ENCODE measurements at regions of chr10 and their contacts with region 1.

Region 1: DNA sequence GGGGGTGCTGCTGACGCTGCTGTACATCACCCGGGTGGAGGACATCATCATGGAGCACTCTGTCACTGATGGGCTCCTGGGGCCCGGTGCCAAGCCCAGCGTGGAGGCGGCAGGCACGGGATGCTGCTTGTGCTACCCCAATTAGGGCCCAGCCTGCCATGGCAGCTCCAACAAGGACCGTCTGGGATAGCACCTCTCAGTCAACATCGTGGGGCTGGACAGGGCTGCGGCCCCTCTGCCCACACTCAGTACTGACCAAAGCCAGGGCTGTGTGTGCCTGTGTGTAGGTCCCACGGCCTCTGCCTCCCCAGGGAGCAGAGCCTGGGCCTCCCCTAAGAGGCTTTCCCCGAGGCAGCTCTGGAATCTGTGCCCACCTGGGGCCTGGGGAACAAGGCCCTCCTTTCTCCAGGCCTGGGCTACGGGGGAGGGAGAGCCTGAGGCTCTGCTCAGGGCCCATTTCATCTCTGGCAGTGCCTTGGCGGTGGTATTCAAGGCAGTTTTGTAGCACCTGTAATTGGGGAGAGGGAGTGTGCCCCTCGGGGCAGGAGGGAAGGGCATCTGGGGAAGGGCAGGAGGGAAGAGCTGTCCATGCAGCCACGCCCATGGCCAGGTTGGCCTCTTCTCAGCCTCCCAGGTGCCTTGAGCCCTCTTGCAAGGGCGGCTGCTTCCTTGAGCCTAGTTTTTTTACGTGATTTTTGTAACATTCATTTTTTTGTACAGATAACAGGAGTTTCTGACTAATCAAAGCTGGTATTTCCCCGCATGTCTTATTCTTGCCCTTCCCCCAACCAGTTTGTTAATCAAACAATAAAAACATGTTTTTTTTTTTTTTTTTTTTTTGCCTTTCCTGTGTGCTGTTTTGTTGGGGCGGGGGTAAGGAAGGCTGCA is 55.8 kb downstream of the TSPAN15 start:
- DNase-seq: peak in 2 of 4 experiments; percentile 6 to 9
- ATAC-seq: peak; percentile 9
- H3K4me3 ChIP-seq: no peak overlapping the region
- H3K27ac ChIP-seq: no peak overlapping the region
- H3K4me1 ChIP-seq: peaks cover 0 to 15% of the 10 kb centered on the region in 2 experiments; a peak in 2 of 5 replicates
- H3K27me3 ChIP-seq: peaks cover 29 to 53% of the 10 kb centered on the region in 2 experiments
- CTCF ChIP-seq: no peak
- EP300 ChIP-seq: no peak
- POLR2A ChIP-seq: no peak
- RAD21 ChIP-seq: no peak

Region 2: GRCh38 chr10:69004821-69005220 is 502.3 kb before region 1 on chr10:
- CTCF ChIA-PET with region 1: no interaction called
- POLR2A ChIA-PET with region 1: no interaction called
- in situ Hi-C with region 1: no loop called
- intact Hi-C with region 1: loop called (anchors 5 kb)
- DNase-seq: peak in 2 of 4 experiments; percentile 38 to 56
- ATAC-seq: peak; percentile 83
- H3K4me3 ChIP-seq: no peak overlapping the region
- H3K27ac ChIP-seq: no peak overlapping the region
- H3K4me1 ChIP-seq: no peaks in the 10 kb centered on the region
- H3K27me3 ChIP-seq: no peaks in the 10 kb centered on the region
- CTCF ChIP-seq: peak; percentile 54 to 90 (median 62); a peak in 5 of 6 replicates
- EP300 ChIP-seq: no peak
- POLR2A ChIP-seq: no peak
- RAD21 ChIP-seq: peak; percentile 91 to 98

Region 3: DNA sequence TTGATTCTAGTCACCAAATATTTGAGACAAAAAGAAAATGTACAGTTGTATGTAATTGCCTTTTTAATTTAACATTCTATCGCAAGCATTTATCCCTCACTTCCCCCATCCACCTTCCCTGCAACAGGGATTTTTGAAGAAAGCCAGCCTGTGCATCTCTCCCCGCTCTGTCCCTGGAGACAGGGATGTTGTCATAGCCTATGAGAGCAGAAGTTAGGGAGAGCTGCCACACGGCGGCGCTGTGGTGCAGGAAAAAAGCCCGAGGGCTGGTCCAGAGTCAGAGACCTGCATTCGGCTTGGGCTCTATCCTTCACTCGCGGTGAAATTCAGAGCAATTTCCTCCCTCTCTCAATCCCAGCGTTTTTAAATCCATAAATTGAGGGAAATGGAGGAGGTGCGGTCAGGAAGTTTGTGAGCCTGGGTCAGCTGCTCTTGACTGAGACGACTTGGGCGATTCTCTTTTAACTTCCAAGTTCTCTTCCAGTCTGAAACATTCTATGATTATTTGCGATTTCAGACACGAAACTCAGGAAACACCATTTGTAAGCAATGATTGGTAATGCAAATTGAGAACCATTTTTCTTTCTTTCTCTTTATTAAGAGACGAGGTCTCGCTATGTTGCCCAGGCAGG is 269.4 kb before region 1 on chr10:
- CTCF ChIA-PET with region 1: interaction called, 5 read pairs
- POLR2A ChIA-PET with region 1: no interaction called
- in situ Hi-C with region 1: no loop called
- intact Hi-C with region 1: loop called (anchors 1 kb)
- DNase-seq: peak; percentile 89 to 94 (median 92)
- ATAC-seq: peak; percentile 97
- H3K4me3 ChIP-seq: no peak overlapping the region
- H3K27ac ChIP-seq: no peak overlapping the region
- H3K4me1 ChIP-seq: peaks cover 13% of the 10 kb centered on the region in 2 experiments; a peak in 4 of 5 replicates
- H3K27me3 ChIP-seq: no peaks in the 10 kb centered on the region
- CTCF ChIP-seq: peak; percentile 94 to 99 (median 97)
- EP300 ChIP-seq: no peak
- POLR2A ChIP-seq: no peak
- RAD21 ChIP-seq: peak; percentile 99 to 100

Region 4: GRCh38 chr10:69408318-69409175 is 98.5 kb before region 1 on chr10:
- CTCF ChIA-PET with region 1: interaction called, 37 read pairs
- POLR2A ChIA-PET with region 1: no interaction called
- in situ Hi-C with region 1: no loop called
- intact Hi-C with region 1: no loop called
- DNase-seq: peak; percentile 96 to 99 (median 98)
- ATAC-seq: peak; percentile 91
- H3K4me3 ChIP-seq: peak overlapping the region; percentile 14; the same call in 1 of the 2 replicates
- H3K27ac ChIP-seq: peak overlapping the region; percentile 69; the same call in 2 of the 3 replicates
- H3K4me1 ChIP-seq: peaks cover 24 to 25% of the 10 kb centered on the region in 2 experiments
- H3K27me3 ChIP-seq: peaks cover 0 to under 1% of the 10 kb centered on the region in 2 experiments; a peak in 1 of 5 replicates
- CTCF ChIP-seq: peak; percentile 50 to 73 (median 68)
- EP300 ChIP-seq: no peak
- POLR2A ChIP-seq: peak; percentile 66
- RAD21 ChIP-seq: peak in 1 of 2 experiments; percentile 43; a peak in 2 of 4 replicates

Region 5: DNA sequence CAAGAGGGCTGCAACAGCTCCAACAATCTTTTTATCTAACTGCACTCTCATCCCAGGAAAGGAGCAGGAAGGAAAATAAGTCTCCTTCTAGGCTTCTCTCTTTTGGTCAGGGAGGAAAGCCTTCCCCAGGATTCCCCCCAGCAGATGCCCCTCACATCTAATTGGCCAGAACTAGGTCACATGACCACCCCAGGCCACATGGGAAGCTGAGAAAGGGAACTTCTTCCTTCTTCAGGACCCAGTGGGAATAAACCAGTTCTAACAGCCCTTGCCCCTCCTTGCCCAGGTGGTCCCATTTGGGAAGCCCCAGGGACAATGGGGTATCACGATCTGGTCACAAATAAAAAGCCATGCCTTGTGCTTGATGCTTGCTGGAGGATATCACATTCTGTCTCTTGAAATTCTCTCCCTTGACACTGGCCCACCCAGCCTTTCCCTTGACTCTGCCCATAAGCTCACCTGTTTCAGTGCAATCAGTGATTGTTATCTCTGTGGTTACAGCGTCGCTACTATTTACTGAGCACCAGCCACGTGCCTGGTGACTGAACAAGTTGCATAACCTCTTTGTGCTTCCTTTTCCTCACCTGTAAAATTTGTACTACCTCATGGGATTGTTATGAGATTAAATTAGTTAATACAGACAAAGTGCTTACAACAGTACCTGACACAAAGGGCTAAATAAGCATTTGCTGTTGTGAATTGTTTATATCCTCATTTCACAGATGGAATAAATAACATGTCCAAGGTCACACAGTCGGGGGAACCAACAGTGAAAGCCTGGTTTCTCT is 81.4 kb before region 1 on chr10:
- CTCF ChIA-PET with region 1: interaction called, 52 read pairs
- POLR2A ChIA-PET with region 1: interaction called, 5 read pairs
- in situ Hi-C with region 1: loop called (anchors 5 kb)
- intact Hi-C with region 1: loop called (anchors 1 kb)
- DNase-seq: peak in 1 of 4 experiments; percentile 54
- ATAC-seq: no peak
- H3K4me3 ChIP-seq: no peak overlapping the region
- H3K27ac ChIP-seq: no peak overlapping the region
- H3K4me1 ChIP-seq: peaks cover 6 to 15% of the 10 kb centered on the region in 2 experiments; a peak in 3 of 5 replicates
- H3K27me3 ChIP-seq: peaks cover 5 to 20% of the 10 kb centered on the region in 2 experiments; a peak in 2 of 5 replicates
- CTCF ChIP-seq: no peak
- EP300 ChIP-seq: no peak
- POLR2A ChIP-seq: no peak
- RAD21 ChIP-seq: no peak

Region 6: GRCh38 chr10:69434169-69434568 is 72.9 kb before region 1 on chr10:
- CTCF ChIA-PET with region 1: no interaction called
- POLR2A ChIA-PET with region 1: no interaction called
- in situ Hi-C with region 1: loop called (anchors 5 kb)
- intact Hi-C with region 1: no loop called
- DNase-seq: no peak
- ATAC-seq: no peak
- H3K4me3 ChIP-seq: no peak overlapping the region
- H3K27ac ChIP-seq: no peak overlapping the region
- H3K4me1 ChIP-seq: peaks cover 0 to 7% of the 10 kb centered on the region in 2 experiments; a peak in 1 of 5 replicates
- H3K27me3 ChIP-seq: peaks cover 23 to 43% of the 10 kb centered on the region in 2 experiments
- CTCF ChIP-seq: no peak
- EP300 ChIP-seq: no peak
- POLR2A ChIP-seq: no peak
- RAD21 ChIP-seq: no peak

Region 7: GRCh38 chr10:69455006-69455763 is 51.9 kb before region 1 on chr10:
- CTCF ChIA-PET with region 1: no interaction called
- POLR2A ChIA-PET with region 1: no interaction called
- in situ Hi-C with region 1: no loop called
- intact Hi-C with region 1: no loop called
- DNase-seq: no peak
- ATAC-seq: no peak
- H3K4me3 ChIP-seq: no peak overlapping the region
- H3K27ac ChIP-seq: no peak overlapping the region
- H3K4me1 ChIP-seq: peaks cover 14 to 18% of the 10 kb centered on the region in 2 experiments
- H3K27me3 ChIP-seq: 0 out of 5 replicates have a peak, but pooled peaks cover 0 to 9% of the 10 kb centered on the region in 2 experiments
- CTCF ChIP-seq: no peak
- EP300 ChIP-seq: no peak
- POLR2A ChIP-seq: no peak
- RAD21 ChIP-seq: no peak

Region 8: DNA sequence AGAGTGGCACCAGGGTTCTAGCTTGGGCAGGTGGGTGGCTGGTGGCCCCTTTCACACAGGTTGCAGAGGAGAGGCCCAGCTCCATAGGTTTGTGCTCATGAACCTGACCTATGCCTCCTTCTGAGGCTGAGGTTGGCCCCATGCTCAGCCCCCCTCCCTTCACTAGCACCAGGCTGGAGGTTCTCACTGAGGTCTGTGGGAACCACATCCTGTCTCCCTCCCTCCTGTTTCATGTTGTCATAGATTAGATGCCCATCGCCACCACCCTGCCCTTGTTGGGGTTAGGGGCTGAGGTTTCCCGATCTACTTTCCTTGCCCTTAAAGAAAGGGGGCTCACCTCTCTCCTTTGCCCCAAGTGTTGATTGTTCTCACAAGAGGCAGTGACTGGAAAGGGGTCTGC is 51.5 kb after region 1 on chr10:
- CTCF ChIA-PET with region 1: no interaction called
- POLR2A ChIA-PET with region 1: no interaction called
- in situ Hi-C with region 1: no loop called
- intact Hi-C with region 1: no loop called
- DNase-seq: no peak
- ATAC-seq: no peak
- H3K4me3 ChIP-seq: no peak overlapping the region
- H3K27ac ChIP-seq: no peak overlapping the region
- H3K4me1 ChIP-seq: no peaks in the 10 kb centered on the region
- H3K27me3 ChIP-seq: peaks cover 9 to 36% of the 10 kb centered on the region in 2 experiments; a peak in 3 of 5 replicates
- CTCF ChIP-seq: no peak
- EP300 ChIP-seq: no peak
- POLR2A ChIP-seq: no peak
- RAD21 ChIP-seq: no peak

Measured in K562 (cell line).